ENCODE measurements at regions of chr9 and their contacts with region 1.

Region 1: DNA sequence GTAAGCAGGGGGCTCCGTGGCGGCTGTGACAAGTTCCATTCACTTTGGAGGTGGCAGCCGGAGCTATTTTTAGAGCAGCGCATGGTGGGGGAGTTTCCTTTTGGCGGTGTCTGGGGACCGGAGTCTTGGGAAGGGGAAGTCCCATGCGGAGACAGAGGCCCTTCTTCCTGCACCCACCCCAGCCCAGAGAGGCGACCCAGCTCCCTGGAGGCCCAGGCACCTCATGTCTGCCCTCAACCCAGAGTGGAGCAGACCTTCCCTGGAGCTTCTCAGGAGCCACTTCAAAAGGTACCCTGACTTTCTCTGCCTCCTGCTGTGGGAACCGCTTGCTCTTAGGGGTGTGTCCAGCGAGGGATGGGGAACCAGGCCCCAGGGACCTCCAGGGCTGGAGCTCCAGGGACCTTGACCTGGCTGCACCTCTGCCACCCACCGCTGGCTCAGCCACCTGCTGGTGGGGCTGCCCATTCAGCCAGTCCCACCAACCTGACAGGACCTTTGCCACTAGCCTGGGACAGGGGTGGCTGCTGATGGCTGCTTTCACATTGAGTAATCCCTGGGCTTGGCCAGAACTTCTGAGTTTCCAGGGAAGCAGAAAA is 34.1 kb downstream of the NEK6 start:
- DNase-seq: peak; percentile 62
- ATAC-seq: peak; percentile 59
- H3K4me3 Mint-ChIP-seq: peak overlapping the region; percentile 68
- H3K27ac Mint-ChIP-seq: peak overlapping the region; percentile 85
- H3K4me1 Mint-ChIP-seq: peaks cover 96% of the 10 kb centered on the region
- H3K27me3 Mint-ChIP-seq: no peaks in the 10 kb centered on the region
- CTCF ChIP-seq: no peak

Region 2: GRCh38 chr9:123929870-123930831 is 361.7 kb before region 1 on chr9 and contains the start of gene DENND1A:
- CTCF ChIA-PET with region 1: no interaction called
- POLR2A ChIA-PET with region 1: no interaction called
- intact Hi-C with region 1: no loop called
- DNase-seq: peak; percentile 86
- ATAC-seq: peak; percentile 92
- H3K4me3 Mint-ChIP-seq: peak within 1 kb of the TSS; percentile 85
- H3K27ac Mint-ChIP-seq: peak within 1 kb of the TSS; percentile 57
- H3K4me1 Mint-ChIP-seq: peaks cover 38% of the 10 kb centered on the region
- H3K27me3 Mint-ChIP-seq: no peaks in the 10 kb centered on the region
- CTCF ChIP-seq: no peak
- total RNA-seq, gene DENND1A: 21.8 and 25.2 TPM in 2 replicates

Region 3: DNA sequence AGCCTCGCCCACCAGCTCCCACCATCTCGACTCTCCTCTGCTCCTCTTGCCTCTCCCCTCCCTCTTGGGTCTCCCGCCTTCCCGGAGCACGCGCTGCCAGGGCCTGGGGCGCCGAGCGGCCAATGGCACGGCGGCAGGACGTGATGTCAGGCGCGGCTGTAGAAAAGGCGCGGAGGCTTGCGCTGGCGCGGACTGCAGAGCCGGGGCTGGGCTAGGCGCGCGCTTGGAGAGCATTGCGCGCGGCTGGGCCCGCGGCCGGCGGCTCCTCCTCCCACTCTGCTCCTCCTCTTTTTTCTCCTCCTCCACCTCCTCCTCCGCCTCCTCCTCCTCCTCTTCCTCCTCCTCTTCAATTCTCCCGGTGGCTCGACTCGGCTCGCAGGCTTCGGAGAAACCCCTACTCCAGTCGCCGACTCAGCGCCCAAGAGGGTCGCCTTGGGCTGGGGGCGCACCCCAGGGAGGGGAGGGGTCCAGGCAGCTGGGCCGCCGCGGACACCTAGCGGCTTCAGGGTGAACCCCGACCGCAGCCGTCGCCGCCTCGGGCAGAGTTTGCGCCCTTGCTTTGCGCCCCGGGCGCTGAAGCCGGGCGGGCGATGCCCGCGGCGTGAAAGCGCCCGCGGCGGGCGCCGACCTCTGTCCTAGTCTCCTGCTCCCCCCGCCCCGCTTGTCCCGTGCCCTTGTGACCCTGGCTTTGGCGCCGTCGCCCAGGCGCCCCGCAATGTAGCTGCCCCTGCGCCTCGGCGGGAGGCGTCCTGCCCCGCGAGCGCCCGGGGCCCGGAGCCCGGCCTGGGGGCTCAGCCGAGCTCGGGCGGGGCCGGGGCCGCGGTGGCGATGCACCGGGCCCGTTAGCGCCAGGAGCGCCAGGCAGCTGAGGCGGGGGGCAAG is 280.2 kb before region 1 on chr9 and contains the start of gene LHX2:
- CTCF ChIA-PET with region 1: no interaction called
- POLR2A ChIA-PET with region 1: no interaction called
- intact Hi-C with region 1: loop called (anchors 10 kb)
- DNase-seq: no peak
- ATAC-seq: peak; percentile 33
- H3K4me3 Mint-ChIP-seq: peak within 1 kb of the TSS; percentile 67
- H3K27ac Mint-ChIP-seq: peak within 1 kb of the TSS; percentile 62
- H3K4me1 Mint-ChIP-seq: peaks cover 52% of the 10 kb centered on the region
- H3K27me3 Mint-ChIP-seq: peaks cover 60% of the 10 kb centered on the region
- CTCF ChIP-seq: no peak
- total RNA-seq, gene LHX2: not detected in 2 replicates

Region 4: GRCh38 chr9:124202447-124202971 is 89.4 kb before region 1 on chr9:
- CTCF ChIA-PET with region 1: no interaction called
- POLR2A ChIA-PET with region 1: interaction called, 6 read pairs
- intact Hi-C with region 1: loop called (anchors 1 kb)
- DNase-seq: peak; percentile 75
- ATAC-seq: peak; percentile 88
- H3K4me3 Mint-ChIP-seq: peak overlapping the region; percentile 80
- H3K27ac Mint-ChIP-seq: peak overlapping the region; percentile 99
- H3K4me1 Mint-ChIP-seq: peaks cover 96% of the 10 kb centered on the region
- H3K27me3 Mint-ChIP-seq: no peaks in the 10 kb centered on the region
- CTCF ChIP-seq: no peak

Region 5: DNA sequence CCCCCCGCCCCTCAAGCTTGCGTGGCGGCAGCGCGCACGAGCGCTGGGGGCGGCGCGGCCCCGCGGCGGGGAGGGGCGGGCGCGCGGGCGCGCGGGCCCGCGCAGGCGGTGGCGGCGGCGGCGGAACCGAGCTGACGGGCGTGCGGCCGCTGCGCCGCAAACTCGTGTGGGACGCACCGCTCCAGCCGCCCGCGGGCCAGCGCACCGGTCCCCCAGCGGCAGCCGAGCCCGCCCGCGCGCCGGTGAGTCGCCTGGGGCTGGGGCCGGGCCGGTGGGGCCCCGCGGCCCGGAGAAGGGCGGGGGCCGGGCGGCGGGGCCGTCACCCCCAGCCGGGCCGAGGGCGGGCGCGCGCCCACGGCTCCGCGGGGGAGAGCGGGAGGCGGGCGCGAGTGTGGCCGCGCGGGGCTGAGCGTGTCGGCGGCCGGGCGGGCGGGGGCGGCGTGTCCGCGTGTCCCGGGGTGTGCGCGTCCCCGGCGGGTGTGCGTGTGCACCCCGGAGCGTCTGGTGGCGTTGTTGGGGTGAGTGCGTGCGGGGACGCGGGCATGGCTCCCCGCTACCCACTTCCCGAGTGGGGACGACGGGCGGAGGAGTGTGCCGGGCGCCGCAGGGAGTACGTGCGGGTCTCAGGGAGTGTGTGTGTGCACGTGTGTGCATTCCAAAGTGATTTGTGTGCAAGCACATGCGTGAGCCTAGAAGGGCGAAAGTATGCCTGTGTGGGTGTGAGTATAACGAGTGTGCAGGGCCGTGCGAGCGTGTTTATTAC is 33.9 kb before region 1 on chr9 and contains the start of gene NEK6:
- CTCF ChIA-PET with region 1: interaction called, 4 read pairs
- POLR2A ChIA-PET with region 1: interaction called, 17 read pairs
- intact Hi-C with region 1: no loop called
- DNase-seq: peak; percentile 56
- ATAC-seq: peak; percentile 41
- H3K4me3 Mint-ChIP-seq: peak within 1 kb of the TSS; percentile 96
- H3K27ac Mint-ChIP-seq: peak within 1 kb of the TSS; percentile 94
- H3K4me1 Mint-ChIP-seq: peaks cover 87% of the 10 kb centered on the region
- H3K27me3 Mint-ChIP-seq: no peaks in the 10 kb centered on the region
- CTCF ChIP-seq: no peak
- total RNA-seq, gene NEK6: 110 and 115 TPM in 2 replicates

Region 6: GRCh38 chr9:124267271-124267807 is 24.6 kb before region 1 on chr9:
- CTCF ChIA-PET with region 1: interaction called, 3 read pairs
- POLR2A ChIA-PET with region 1: interaction called, 37 read pairs
- intact Hi-C with region 1: no loop called
- DNase-seq: peak; percentile 43
- ATAC-seq: peak; percentile 49
- H3K4me3 Mint-ChIP-seq: peak overlapping the region; percentile 66
- H3K27ac Mint-ChIP-seq: peak overlapping the region; percentile 88
- H3K4me1 Mint-ChIP-seq: peaks cover 95% of the 10 kb centered on the region
- H3K27me3 Mint-ChIP-seq: no peaks in the 10 kb centered on the region
- CTCF ChIP-seq: no peak

Region 7: DNA sequence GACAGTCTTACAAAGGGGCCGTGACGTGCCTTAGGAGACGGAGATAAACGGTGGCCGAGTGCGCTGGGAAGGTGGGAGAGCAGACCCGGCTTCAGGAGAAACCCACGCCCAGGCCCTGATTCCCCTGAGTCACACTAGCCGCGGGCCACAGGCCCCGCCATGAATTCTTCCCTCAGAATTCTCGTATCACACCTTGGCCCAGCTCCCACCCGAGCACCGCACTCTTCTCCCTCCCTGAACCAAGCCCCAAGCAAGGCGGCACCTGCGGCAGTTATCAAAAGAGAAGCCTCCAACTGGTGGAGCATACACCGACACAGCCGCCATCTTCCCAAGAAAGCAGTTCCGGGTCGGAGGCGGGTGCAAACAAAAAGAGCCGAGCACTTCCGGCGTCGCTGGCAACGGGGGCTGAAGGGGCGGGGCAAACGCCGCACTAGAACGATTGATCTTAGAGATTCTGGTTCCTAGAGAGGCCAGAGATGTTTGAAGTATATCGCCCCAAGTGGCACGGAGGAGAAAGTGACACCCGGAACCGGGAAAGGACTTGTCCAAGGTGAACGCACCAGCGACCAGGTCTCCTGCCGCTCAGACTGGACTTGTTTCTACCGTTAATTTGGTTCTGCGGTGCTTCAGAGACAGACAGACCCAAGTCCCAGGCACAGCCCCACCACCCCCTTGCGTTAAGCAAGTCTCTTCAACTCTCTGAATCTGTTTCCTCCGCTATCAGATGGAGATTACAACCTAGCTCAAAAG is 123.4 kb after region 1 on chr9 and contains the start of gene PSMB7:
- CTCF ChIA-PET with region 1: no interaction called
- POLR2A ChIA-PET with region 1: no interaction called
- intact Hi-C with region 1: loop called (anchors 5 kb)
- DNase-seq: peak; percentile 91
- ATAC-seq: peak; percentile 94
- H3K4me3 Mint-ChIP-seq: peak within 1 kb of the TSS; percentile 99
- H3K27ac Mint-ChIP-seq: peak within 1 kb of the TSS; percentile 94
- H3K4me1 Mint-ChIP-seq: peaks cover 25% of the 10 kb centered on the region
- H3K27me3 Mint-ChIP-seq: no peaks in the 10 kb centered on the region
- CTCF ChIP-seq: peak; percentile 38
- total RNA-seq, gene PSMB7: 120 and 140 TPM in 2 replicates

Region 8: GRCh38 chr9:124593651-124594058 is 301.8 kb after region 1 on chr9:
- CTCF ChIA-PET with region 1: no interaction called
- POLR2A ChIA-PET with region 1: no interaction called
- intact Hi-C with region 1: no loop called
- DNase-seq: no peak
- ATAC-seq: no peak
- H3K4me3 Mint-ChIP-seq: no peak overlapping the region
- H3K27ac Mint-ChIP-seq: no peak overlapping the region
- H3K4me1 Mint-ChIP-seq: no peaks in the 10 kb centered on the region
- H3K27me3 Mint-ChIP-seq: peaks cover 10% of the 10 kb centered on the region
- CTCF ChIP-seq: no peak